ENCODE measurements at regions of chr11 and their contacts with region 1.

Region 1: DNA sequence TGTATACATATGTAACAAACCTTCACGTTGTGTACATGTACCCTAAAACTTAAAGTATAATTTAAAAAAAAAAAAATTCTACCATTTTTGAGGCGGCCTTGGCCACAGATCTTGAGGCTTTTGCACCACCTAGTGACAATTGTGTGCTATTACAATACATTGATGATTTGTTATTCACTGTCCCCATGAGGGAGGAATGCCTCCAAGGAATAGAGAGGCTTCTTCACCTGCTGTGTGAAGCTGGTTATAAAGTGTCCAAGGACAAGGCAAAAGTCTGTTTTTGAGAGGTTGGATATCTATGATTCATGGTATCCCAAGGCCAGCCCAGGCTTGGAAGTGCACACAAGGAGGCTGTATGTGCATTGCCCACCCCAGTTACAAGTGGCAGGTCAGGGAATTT is 30.7 kb downstream of the SLC22A25 start:
- DNase-seq: no peak
- ATAC-seq: no peak
- H3K4me3 ChIP-seq: no peak overlapping the region
- H3K27ac ChIP-seq: no peak overlapping the region
- H3K4me1 ChIP-seq: no peaks in the 10 kb centered on the region
- H3K27me3 ChIP-seq: peaks cover 0 to 5% (median 0%) of the 10 kb centered on the region in 7 donors
- CTCF ChIP-seq: peak in 8 of 9 donors; percentile 28 to 57 (median 46)

Region 2: DNA sequence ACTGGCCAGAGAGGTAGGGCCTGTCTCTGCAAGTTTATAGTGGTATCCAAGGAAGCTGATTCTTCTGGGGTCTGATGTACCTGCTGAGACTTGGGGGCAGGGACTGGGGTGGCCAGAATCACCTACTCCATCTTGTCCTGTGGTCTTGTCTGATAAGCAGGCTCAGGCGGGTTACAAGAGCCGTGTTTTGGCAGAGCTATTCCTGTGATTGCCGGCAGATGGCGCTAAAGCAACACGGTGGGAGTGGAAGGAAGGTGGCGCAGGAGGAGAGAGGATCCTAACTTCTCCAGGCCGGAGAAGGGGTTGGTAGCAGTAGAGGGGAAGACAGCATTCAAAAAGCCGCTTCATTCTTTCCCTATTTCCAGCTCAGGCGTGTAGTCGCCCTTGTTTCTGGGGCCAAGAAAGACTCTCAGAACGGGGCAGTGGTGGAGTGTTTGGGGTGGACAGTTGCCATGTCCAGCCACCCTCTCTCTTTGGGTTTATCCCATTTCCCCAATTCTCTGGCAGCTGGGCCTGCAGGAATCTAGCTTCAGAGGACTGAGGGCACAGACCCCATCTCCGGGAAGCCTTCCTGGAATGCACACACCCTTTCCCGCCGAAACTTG is 306.7 kb before region 1 on chr11:
- intact Hi-C with region 1: loop called in 6 of 10 experiments (anchors 5 to 10 kb)
- DNase-seq: peak; percentile 78 to 81
- ATAC-seq: peak; percentile 70 to 83 (median 75)
- H3K4me3 ChIP-seq: no peak overlapping the region
- H3K27ac ChIP-seq: no peak overlapping the region
- H3K4me1 ChIP-seq: peaks cover 4 to 27% (median 17%) of the 10 kb centered on the region in 9 donors
- H3K27me3 ChIP-seq: no peaks in the 10 kb centered on the region
- CTCF ChIP-seq: peak; percentile 96 to 100 (median 99)

Region 3: GRCh38 chr11:63032457-63032856 is 180.3 kb before region 1 on chr11:
- intact Hi-C with region 1: loop called in 4 of 10 experiments (anchors 2 to 10 kb)
- DNase-seq: no peak
- ATAC-seq: no peak
- H3K4me3 ChIP-seq: no peak overlapping the region
- H3K27ac ChIP-seq: no peak overlapping the region
- H3K4me1 ChIP-seq: peaks cover 0 to 3% (median 0%) of the 10 kb centered on the region in 9 donors
- H3K27me3 ChIP-seq: peaks cover 0 to 27% (median 0%) of the 10 kb centered on the region in 7 donors
- CTCF ChIP-seq: no peak

Region 4: DNA sequence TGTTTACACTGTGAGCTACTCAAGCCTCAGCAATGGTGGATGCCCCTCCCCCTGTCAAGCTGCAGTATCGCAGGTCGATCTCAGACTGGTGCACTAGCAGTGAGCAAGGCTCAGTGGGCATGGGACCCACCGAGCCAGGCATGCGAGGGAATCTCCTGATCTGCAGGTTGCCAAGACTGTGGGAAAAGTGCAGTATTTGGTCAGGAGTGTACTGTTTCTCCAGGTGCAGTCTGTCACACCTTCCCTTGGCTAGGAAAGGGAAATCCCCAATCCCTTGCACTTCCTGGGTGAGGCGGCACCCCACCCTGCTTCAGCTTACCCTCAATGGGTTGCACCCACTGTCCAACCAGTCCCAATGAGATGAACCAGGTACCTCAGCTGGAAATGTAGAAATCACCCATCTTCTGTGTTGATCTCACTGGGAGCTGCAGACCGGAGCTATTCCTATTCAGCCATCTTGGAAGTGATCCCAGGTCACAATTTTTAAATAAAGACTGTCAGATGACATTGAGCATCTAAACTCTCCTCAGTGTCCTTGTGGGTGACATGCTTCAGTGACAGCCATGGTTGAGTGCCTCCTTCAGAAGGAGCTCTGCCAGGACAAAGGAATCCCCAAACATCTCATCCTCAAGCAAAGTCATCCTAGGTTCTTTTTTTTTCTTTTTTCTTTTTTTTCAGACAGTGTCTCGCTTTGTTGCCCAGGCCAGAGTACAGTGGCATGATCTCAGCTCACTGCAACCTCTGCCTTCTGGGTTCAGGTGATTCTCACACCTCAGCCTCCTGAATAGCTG is 79.6 kb before region 1 on chr11:
- intact Hi-C with region 1: loop called in 5 of 10 experiments (anchors 2 to 10 kb)
- DNase-seq: no peak
- ATAC-seq: no peak
- H3K4me3 ChIP-seq: no peak overlapping the region
- H3K27ac ChIP-seq: no peak overlapping the region
- H3K4me1 ChIP-seq: no peaks in the 10 kb centered on the region
- H3K27me3 ChIP-seq: peaks cover 0 to 16% (median 5%) of the 10 kb centered on the region in 7 donors
- CTCF ChIP-seq: no peak

Region 5: DNA sequence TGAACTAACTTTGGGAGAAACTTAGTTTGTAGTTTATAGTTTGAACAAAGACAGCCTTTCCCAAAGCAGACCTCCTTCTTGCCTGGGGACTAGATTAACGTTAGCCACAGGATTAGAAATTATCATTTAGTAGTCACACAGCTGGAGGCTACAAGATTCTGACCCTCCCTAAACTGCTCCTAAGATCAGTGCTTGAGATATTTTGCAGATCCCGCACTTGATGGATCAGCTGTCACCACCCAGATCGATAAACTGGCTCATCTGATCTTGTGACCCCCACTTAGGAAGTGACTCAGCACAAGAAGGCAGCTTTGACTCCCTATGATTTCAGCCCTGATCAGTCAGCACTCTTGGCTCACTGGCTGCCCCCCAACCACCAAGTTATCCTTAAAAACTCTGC is 70.3 kb before region 1 on chr11:
- intact Hi-C with region 1: loop called in 2 of 10 experiments (anchors 5 to 10 kb)
- DNase-seq: no peak
- ATAC-seq: no peak
- H3K4me3 ChIP-seq: no peak overlapping the region
- H3K27ac ChIP-seq: no peak overlapping the region
- H3K4me1 ChIP-seq: peaks cover 0 to 6% (median 0%) of the 10 kb centered on the region in 9 donors
- H3K27me3 ChIP-seq: peaks cover 0 to 6% (median 0%) of the 10 kb centered on the region in 7 donors
- CTCF ChIP-seq: no peak

Measured in heart right ventricle (tissue), 16 donors.